Breast epithelium (tissue), 4 donors: ENCODE measurements at regions of chr1 and their contacts with region 1.

Region 1: DNA sequence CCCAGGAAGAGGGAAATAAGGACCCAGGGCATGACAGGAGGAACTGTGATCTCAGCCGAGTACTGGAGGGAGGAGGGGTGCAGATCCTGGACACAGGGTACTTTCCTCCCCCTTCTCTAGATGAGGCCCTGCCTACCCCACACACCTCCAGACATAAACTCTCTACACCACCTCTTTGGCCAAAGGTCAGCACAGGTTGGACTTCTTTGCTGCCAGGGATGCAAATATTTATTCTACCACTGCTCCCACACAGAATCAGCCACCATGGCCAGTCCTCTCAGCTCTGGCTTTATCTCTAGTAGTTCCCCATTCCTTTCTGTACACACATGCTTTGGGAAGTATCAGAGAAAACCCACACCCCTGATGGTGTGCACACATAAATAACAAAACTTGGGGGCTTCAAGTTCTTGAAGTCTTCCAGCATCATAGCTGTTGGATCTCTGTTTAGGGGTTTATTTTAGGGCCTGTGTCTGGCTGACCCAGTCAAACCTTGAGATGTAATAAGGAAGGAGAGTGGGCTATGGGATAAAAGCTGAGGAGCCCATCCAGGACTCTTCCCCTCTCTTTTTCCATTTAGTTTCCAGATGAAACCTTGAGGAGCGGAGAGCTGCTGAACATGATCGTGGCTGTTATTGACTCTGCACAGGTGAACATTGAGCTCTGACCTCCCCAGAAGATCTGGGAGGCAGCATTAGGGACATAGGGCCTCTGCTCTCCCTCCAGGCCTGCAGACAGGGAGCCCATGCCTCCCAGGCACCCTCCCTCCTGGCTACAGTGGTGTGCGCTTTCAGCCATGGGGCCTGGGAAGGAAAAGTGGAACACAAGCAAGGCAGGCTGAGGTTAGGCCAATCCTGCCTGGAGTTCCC is 6.7 kb upstream of the SLC27A3 start:
- DNase-seq: no peak
- H3K4me3 ChIP-seq: no peak overlapping the region
- H3K27ac ChIP-seq: peak overlapping the region in 1 of 2 donors; percentile 20
- H3K4me1 ChIP-seq: peaks cover 0 to 4% of the 10 kb centered on the region in 2 donors
- H3K27me3 ChIP-seq: no peaks in the 10 kb centered on the region
- CTCF ChIP-seq: no peak
- POLR2A ChIP-seq: no peak

Region 2: GRCh38 chr1:153510984-153511410 is 257.6 kb before region 1 on chr1:
- intact Hi-C with region 1: loop called (anchors 5 kb)
- DNase-seq: peak; percentile 70 to 71
- H3K4me3 ChIP-seq: no peak overlapping the region
- H3K27ac ChIP-seq: no peak overlapping the region
- H3K4me1 ChIP-seq: peaks cover 0 to 18% of the 10 kb centered on the region in 2 donors
- H3K27me3 ChIP-seq: no peaks in the 10 kb centered on the region
- CTCF ChIP-seq: peak; percentile 48 to 91 (median 90)
- POLR2A ChIP-seq: no peak